Adrenal gland (tissue), 19 donors: ENCODE measurements at regions of chr17 and their contacts with region 1.

Region 1: DNA sequence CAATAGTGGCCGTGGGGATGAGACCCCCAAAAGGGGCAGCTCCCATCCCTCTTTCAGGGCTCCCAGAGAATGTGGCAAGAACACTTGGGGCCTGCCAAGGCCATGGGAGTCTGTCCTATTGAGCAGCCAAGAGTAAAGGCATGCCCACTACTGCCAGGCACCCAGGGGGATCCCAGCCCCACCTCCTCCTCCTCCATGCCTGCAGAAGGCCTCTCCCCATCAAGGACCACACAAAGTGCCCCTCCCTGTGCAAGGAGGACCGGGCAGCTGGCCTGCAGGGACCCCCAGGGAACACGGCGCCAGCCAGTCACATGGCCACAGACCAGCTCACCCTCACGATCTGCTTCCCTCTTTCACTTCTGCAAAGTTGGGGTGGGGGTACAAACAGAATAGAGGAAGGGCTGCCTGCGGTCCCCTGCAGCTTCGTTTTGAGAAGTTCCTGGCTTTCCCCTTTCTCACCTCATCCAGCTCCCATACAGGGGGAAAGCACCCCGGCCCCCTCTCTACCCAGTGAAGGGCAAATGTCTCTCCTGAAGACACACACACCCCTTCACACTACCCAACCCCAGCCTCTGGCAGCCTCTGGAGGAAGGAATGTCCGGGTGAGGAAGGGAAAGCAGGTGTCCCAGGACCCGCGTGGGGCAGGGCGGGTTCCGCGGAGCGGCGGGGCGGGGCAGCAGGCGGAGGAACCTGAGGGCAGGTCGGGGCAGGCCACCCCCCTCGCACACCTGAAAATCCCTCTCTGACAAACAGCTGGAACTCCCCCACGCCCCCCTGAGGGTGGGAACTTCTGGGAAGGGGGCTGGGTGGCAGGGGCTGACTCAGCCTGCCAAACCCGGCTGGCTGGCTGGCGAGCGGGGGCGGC is 2.0 kb downstream of the PPP1R9B start:
- DNase-seq: peak in 4 of 7 donors; percentile 53 to 65 (median 63)
- H3K4me3 ChIP-seq: peak overlapping the region in 3 of 4 donors; percentile 19 to 92 (median 60)
- H3K27ac ChIP-seq: peak overlapping the region; percentile 23 to 94 (median 89)
- H3K4me1 ChIP-seq: peaks cover 60 to 71% of the 10 kb centered on the region in 2 donors
- H3K27me3 ChIP-seq: no peaks in the 10 kb centered on the region
- CTCF ChIP-seq: peak in 2 of 6 experiments; percentile 16 to 18
- POLR2A ChIP-seq: no peak

Region 2: DNA sequence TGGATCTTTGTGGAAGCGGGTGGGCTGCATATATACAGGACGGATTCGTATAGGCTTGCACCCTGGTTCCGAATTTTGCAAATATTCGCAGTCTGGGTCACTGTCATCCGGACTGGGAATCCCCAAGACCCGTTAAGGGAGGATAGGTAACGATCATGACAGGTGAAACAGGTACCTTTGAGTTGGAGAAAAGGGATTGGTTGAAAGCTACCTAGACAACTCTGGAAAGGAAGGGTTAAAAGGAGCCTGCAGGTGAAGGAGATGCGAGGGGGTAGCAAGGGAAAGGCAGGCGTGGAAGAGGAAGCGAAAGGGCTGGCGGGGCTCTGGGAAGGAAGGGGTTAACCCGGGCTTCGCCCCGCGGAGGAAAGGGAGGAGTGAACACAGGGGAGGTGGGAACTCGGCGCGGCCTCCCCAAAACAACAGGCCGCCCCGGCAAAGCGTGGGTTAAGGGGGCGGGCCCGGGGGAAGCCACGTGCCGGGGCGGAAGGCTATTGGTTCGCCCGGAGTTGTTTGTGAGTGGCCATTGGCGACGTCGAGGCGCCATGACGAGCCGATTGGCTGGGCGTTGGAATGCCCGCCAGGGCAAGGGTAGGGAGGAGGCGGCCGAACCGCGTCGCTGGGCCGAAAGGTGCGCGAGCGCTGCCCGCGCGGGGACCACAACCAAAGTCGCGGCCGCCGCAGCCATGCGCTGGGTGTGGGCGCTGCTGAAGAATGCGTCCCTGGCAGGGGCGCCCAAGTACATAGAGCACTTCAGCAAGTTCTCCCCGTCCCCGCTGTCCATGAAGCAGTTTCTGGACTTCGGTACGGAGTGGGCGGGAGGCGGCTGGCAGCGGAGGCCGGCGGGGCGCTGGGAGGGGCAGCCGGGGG is 53.5 kb before region 1 on chr17 and contains the start of gene PDK2:
- intact Hi-C with region 1: loop called in 1 of 2 experiments (anchors 5 kb)
- DNase-seq: peak; percentile 96 to 99 (median 98)
- H3K4me3 ChIP-seq: peak within 1 kb of the TSS; percentile 87 to 97 (median 91)
- H3K27ac ChIP-seq: peak within 1 kb of the TSS; percentile 27 to 84 (median 81)
- H3K4me1 ChIP-seq: peaks cover 10 to 11% of the 10 kb centered on the region in 2 donors
- H3K27me3 ChIP-seq: no peaks in the 10 kb centered on the region
- CTCF ChIP-seq: peak in 1 of 6 experiments; percentile 9
- POLR2A ChIP-seq: peak; percentile 60 to 90
- total RNA-seq, gene PDK2: 28.4 to 225 (median 126) TPM